ENCODE measurements at regions of chr2 and their contacts with region 1.

Region 1: DNA sequence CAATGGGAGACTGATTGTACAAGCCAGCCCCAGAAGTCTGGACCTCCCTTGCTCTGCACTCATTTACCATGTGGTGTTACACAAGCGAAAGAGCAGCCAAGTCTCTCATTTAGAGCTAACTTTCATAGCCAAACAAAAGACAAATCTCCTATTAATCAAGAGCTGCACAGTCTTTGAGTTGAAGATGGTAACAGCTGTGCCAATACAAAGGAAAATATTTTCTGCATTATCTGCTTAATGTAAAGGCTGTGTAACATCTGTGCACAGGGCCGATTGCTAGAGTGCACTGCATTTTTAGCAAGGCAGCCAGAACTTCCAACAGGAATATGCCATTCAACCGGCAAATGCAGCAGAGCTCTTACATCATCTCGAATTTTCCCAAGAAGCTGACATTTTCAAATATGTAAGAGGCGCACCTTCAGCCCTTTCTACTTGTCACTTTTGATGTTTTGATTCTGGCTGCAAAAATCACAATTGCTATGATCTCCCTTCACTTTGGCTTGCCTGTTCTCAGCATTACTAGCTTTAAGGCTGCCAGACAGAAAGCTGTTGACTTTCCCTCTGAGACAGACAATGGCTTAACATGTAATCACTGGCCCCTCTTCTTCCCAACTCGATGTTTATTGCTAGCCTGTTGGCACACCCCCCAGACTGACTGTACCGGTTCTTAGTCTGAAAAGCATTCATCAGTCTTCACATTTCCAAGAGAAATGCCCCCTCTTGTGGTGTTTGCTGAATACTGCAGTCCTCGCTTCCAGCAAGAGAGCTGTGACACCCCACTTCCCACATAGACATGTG is 96.9 kb upstream of the TANK start:
- DNase-seq: peak; percentile 74
- H3K4me3 Mint-ChIP-seq: no peak overlapping the region
- H3K27ac Mint-ChIP-seq: no peak overlapping the region
- H3K4me1 Mint-ChIP-seq: peaks cover 10% of the 10 kb centered on the region
- H3K27me3 Mint-ChIP-seq: no peaks in the 10 kb centered on the region

Region 2: DNA sequence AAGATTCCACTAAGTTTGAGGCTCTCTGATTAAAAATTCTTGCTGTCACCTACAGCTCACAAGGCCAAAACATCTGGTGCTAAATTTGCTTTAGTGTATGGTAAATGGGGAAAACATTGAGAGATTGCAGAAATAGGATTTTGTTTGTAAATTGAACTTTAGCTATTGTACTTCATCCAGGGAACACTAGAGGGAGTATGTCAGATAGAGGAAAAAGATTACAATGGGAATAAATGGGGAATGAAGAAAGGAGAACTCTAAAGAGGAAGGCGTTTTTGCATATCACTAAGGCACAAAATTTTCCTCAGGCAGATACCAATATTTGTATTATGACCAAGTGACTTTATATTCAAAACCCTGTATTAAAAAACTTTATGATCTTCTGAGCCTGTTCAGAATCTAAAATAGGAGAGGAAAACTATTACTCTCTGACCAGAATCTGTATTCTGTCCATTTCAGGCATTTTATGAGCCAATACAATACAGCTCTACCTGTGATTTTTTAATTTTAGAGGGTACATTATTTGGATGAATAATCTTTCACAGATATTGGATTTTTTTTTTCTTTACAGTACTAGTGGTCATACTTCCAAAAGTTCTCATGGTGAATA is 811.0 kb before region 1 on chr2:
- CTCF ChIA-PET with region 1: interaction called, 11 read pairs
- POLR2A ChIA-PET with region 1: no interaction called
- intact Hi-C with region 1: no loop called
- DNase-seq: no peak
- H3K4me3 Mint-ChIP-seq: no peak overlapping the region
- H3K27ac Mint-ChIP-seq: no peak overlapping the region
- H3K4me1 Mint-ChIP-seq: no peaks in the 10 kb centered on the region
- H3K27me3 Mint-ChIP-seq: peaks cover 1% of the 10 kb centered on the region

Region 3: DNA sequence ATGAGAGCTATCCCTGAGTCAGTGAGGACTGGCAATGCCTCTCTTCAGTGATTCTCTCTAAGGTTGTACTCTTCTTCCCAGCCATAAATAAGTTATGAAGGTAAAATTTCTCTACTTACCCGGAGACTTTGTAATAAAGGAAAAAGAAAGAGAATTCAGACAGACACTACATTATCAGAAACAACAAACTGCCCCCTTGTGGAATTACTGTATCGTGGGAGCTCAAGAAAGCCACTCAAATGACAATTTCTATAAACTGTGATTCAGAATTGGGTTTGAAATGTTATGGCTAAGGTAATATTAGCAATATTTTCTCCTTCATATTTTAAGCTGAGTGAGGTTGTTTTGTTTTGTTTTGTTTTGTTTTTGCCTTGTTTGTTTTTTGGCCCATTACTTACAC is 59.0 kb before region 1 on chr2:
- CTCF ChIA-PET with region 1: interaction called, 16 read pairs
- POLR2A ChIA-PET with region 1: no interaction called
- intact Hi-C with region 1: no loop called
- DNase-seq: no peak
- H3K4me3 Mint-ChIP-seq: no peak overlapping the region
- H3K27ac Mint-ChIP-seq: no peak overlapping the region
- H3K4me1 Mint-ChIP-seq: no peaks in the 10 kb centered on the region
- H3K27me3 Mint-ChIP-seq: peaks cover 20% of the 10 kb centered on the region

Region 4: DNA sequence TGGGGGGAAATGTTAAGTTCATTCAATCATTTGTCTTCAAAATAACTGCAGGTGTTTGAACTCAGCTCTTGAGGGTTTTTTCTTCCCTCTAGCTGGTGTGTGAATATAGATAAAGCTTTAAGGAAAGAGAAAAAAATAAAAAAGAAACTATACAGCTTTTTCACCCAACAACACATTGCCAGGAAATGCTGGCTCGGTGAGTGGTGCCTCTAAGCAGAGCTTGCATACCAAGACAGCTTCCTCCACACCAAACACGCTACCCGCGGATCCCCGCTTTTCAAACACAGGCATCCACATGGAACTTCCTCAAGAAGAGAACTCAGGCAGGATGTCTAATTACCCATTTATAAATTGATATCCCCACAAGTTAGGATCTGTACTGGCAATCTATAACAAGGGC is 27.1 kb after region 1 on chr2:
- CTCF ChIA-PET with region 1: interaction called, 18 read pairs
- POLR2A ChIA-PET with region 1: no interaction called
- intact Hi-C with region 1: no loop called
- DNase-seq: peak; percentile 57
- H3K4me3 Mint-ChIP-seq: peak overlapping the region; percentile 48
- H3K27ac Mint-ChIP-seq: peak overlapping the region; percentile 54
- H3K4me1 Mint-ChIP-seq: peaks cover 35% of the 10 kb centered on the region
- H3K27me3 Mint-ChIP-seq: no peaks in the 10 kb centered on the region

Region 5: GRCh38 chr2:161122772-161123530 is 59.6 kb after region 1 on chr2:
- CTCF ChIA-PET with region 1: interaction called, 11 read pairs
- POLR2A ChIA-PET with region 1: no interaction called
- intact Hi-C with region 1: no loop called
- DNase-seq: peak; percentile 62
- H3K4me3 Mint-ChIP-seq: peak overlapping the region; percentile 17
- H3K27ac Mint-ChIP-seq: peak overlapping the region; percentile 58
- H3K4me1 Mint-ChIP-seq: peaks cover 24% of the 10 kb centered on the region
- H3K27me3 Mint-ChIP-seq: no peaks in the 10 kb centered on the region

Region 6: GRCh38 chr2:161223139-161223732 is 159.9 kb after region 1 on chr2:
- CTCF ChIA-PET with region 1: interaction called, 11 read pairs
- POLR2A ChIA-PET with region 1: no interaction called
- intact Hi-C with region 1: no loop called
- DNase-seq: no peak
- H3K4me3 Mint-ChIP-seq: no peak overlapping the region
- H3K27ac Mint-ChIP-seq: no peak overlapping the region
- H3K4me1 Mint-ChIP-seq: no peaks in the 10 kb centered on the region
- H3K27me3 Mint-ChIP-seq: no peaks in the 10 kb centered on the region